K562 (cell line): ENCODE measurements at regions of chr9 and their contacts with region 1.

Region 1: DNA sequence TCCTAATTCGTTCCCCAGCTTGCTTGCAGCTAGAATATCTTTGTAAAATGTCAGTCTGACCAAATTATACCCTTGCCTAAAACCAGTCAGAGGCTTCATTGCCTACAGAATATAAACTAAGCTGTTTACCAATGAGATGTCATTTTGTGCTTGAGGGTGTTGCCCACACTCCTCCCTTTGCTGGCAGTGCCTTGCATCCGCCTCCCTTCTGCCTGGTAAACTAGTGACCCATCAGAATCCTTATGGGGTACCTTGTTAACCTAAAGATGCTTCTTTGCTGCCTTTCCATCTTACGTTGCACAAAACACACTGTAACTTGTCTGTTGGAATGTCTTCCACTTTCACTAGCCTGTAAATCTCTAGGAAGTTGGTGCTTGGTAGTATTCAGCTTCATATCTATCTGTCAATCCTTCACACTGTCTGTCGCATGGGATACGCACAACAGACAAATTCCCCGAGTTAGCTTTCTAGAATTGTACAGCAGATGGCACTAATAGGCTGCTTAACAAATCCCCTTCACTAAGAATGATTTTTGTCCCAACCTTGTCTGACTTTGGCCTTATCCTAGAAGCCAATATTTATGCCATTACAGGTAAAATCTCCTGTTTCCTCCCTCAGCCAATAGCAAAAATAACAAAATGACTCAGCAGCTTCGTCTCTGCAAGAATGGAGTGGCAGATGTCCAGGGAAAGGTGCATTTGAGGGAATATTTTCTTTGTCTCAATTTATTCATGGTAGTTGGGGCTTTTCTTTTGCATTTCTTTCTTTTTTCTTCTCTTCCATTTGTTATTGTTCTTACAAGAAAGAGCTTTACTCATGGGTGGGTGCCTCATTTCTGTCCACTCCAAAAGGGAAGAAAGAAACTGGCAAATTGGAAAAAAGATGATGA is 3.0 kb downstream of the NUDT2 start:
- DNase-seq: peak; percentile 14 to 56 (median 19)
- ATAC-seq: no peak
- H3K4me3 ChIP-seq: no peak overlapping the region
- H3K27ac ChIP-seq: no peak overlapping the region
- H3K4me1 ChIP-seq: peaks cover 10% of the 10 kb centered on the region in 2 experiments; a peak in 3 of 5 replicates
- H3K27me3 ChIP-seq: no peaks in the 10 kb centered on the region
- CTCF ChIP-seq: peak; percentile 50 to 65 (median 50)
- EP300 ChIP-seq: no peak
- POLR2A ChIP-seq: no peak
- RAD21 ChIP-seq: peak; percentile 58 to 77

Region 2: DNA sequence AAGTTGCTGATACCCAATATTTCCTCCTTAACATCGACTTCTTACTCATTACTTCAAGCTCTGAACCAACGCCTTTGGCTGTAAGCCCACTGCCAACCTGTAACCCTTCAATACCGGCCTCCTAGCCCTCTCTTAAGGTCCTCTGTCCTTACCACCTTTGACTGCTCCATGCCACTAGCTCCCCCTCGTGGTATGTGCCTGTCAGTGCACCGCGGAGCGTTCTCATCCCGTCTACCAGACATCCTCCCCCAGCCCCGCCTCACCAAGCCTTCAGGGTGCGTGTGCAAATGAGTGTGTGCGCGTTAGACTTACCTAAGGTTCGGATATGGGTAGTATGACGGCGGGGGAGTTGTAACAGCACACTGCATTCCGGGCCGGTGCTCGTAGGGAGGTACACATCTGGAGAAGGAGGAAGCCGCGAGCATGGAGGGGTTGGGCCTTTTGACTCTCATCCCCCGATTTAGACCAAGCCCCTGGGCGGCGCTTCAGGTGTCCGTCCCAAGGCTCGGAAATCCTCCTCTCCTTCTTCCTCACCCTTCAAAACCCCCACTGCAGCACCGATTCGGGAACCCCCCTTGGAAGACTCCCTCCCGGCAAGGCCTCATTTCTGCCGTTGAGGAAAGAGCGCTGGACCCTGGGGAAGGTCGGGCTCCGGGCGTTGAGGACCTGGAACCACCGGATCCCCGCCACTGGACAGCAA is 47.2 kb after region 1 on chr9:
- CTCF ChIA-PET with region 1: interaction called, 3 read pairs
- POLR2A ChIA-PET with region 1: interaction called, 6 read pairs
- in situ Hi-C with region 1: no loop called
- intact Hi-C with region 1: loop called (anchors 1 kb)
- DNase-seq: peak; percentile 75 to 86 (median 80)
- ATAC-seq: peak; percentile 63
- H3K4me3 ChIP-seq: no peak overlapping the region
- H3K27ac ChIP-seq: no peak overlapping the region; the same call in 2 of the 3 replicates
- H3K4me1 ChIP-seq: peaks cover 9 to 39% of the 10 kb centered on the region in 2 experiments; a peak in 4 of 5 replicates
- H3K27me3 ChIP-seq: no peaks in the 10 kb centered on the region
- CTCF ChIP-seq: peak; percentile 85 to 97 (median 90)
- EP300 ChIP-seq: no peak
- POLR2A ChIP-seq: no peak
- RAD21 ChIP-seq: peak; percentile 64 to 80

Region 3: DNA sequence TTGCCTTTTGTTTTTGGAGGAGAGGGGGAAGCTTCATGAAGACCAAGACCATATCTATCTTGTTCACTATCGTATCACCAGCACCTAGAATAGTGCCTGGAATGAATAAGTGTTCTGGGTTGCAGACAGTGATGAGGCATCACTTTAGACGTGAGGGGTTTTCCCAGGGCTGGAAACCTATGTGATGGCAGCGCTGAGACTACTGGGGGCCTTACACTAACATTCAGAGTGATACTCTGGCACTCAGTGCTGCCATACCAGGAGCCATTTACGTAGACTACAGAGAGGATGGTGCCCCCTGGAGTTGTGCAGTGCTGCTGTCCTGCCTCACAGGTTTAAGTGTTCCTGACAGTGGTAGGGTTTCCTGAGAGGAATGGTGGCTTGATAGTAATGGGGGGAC is 351.8 kb after region 1 on chr9:
- CTCF ChIA-PET with region 1: no interaction called
- POLR2A ChIA-PET with region 1: no interaction called
- in situ Hi-C with region 1: no loop called
- intact Hi-C with region 1: no loop called
- DNase-seq: no peak
- ATAC-seq: no peak
- H3K4me3 ChIP-seq: no peak overlapping the region
- H3K27ac ChIP-seq: no peak overlapping the region
- H3K4me1 ChIP-seq: no peaks in the 10 kb centered on the region
- H3K27me3 ChIP-seq: no peaks in the 10 kb centered on the region
- CTCF ChIP-seq: 0 out of 6 replicates have a peak, but pooled peaks of 1 of the 3 experiments have one; percentile 12
- EP300 ChIP-seq: no peak
- POLR2A ChIP-seq: no peak
- RAD21 ChIP-seq: no peak